ENCODE measurements at regions of chr4 and their contacts with region 1.

Region 1: GRCh38 chr4:111283061-111283677 is 660.3 kb upstream of the PITX2 start:
- DNase-seq: peak; percentile 15
- H3K4me3 ChIP-seq: no peak overlapping the region
- H3K27ac ChIP-seq: no peak overlapping the region
- H3K27me3 ChIP-seq: no peaks in the 10 kb centered on the region
- CTCF ChIP-seq: peak; percentile 90

Region 2: DNA sequence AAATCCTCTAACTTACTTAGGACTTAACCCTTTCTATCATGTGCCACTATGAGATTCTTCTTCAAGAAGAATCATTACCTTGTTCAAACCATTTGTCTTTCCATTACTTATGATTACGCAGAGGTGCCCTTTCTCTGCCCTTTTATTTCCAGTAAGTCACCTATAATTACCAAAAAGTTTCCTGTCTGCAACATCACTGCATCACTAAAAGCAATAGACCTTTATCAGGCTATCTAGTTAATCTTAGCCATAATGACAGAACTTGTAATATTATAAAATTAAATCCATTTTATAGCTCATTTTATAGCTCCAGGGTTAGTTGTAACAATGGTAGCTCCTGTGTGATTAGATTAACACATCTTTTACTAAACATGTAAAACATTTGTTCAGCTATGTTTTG is 13.3 kb after region 1 on chr4:
- CTCF ChIA-PET with region 1: interaction called, 13 read pairs
- POLR2A ChIA-PET with region 1: no interaction called
- DNase-seq: no peak
- H3K4me3 ChIP-seq: no peak overlapping the region
- H3K27ac ChIP-seq: no peak overlapping the region
- H3K27me3 ChIP-seq: no peaks in the 10 kb centered on the region
- CTCF ChIP-seq: no peak